ENCODE measurements at regions of chr4 and their contacts with region 1.

Region 1: GRCh38 chr4:88027611-88028608 is 20.5 kb downstream of the PKD2 start:
- DNase-seq: no peak
- ATAC-seq: no peak
- H3K4me3 ChIP-seq: no peak overlapping the region
- H3K27ac ChIP-seq: no peak overlapping the region
- H3K4me1 ChIP-seq: no peaks in the 10 kb centered on the region
- H3K27me3 ChIP-seq: no peaks in the 10 kb centered on the region
- CTCF ChIP-seq: no peak
- EP300 ChIP-seq: no peak
- POLR2A ChIP-seq: no peak
- RAD21 ChIP-seq: no peak

Region 2: DNA sequence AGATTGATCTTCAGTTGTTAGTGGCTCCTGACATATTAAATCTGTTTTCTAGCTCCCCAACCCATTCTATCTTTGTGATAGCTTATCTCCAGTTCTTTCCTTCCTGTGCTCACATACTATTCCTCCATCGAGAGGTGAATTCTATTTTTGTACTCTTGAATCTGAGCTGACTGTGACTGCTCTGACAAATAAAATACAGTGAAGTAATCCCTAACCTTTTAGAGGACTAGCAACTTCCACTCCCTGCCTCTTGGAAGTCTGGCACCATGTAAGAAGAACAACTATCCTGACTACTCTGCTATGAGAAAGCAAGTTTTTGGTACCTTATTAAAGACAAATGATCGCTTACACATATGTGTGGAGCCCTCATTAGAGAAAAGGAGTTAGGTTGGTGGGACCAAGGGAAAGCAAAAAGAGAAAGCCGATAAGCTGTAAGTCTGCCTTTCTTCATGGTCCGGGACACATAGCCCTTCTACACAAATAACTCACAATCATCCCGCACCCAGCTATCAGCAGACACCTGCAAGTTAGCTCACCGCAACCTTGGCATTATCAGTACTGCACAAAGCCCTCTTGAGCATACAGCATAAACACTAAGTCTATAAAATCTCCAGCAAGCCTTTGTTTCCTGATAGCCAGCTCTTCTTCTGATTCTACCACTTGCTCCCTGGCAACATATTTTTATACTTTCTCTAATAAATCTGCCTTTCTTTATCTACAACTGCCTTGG is 270.0 kb after region 1 on chr4:
- CTCF ChIA-PET with region 1: no interaction called
- POLR2A ChIA-PET with region 1: no interaction called
- in situ Hi-C with region 1: no loop called
- intact Hi-C with region 1: no loop called
- DNase-seq: no peak
- ATAC-seq: no peak
- H3K4me3 ChIP-seq: no peak overlapping the region
- H3K27ac ChIP-seq: no peak overlapping the region
- H3K4me1 ChIP-seq: no peaks in the 10 kb centered on the region
- H3K27me3 ChIP-seq: peaks cover 0 to 11% of the 10 kb centered on the region in 2 experiments; a peak in 1 of 5 replicates
- CTCF ChIP-seq: no peak
- EP300 ChIP-seq: no peak
- POLR2A ChIP-seq: no peak
- RAD21 ChIP-seq: no peak

Region 3: DNA sequence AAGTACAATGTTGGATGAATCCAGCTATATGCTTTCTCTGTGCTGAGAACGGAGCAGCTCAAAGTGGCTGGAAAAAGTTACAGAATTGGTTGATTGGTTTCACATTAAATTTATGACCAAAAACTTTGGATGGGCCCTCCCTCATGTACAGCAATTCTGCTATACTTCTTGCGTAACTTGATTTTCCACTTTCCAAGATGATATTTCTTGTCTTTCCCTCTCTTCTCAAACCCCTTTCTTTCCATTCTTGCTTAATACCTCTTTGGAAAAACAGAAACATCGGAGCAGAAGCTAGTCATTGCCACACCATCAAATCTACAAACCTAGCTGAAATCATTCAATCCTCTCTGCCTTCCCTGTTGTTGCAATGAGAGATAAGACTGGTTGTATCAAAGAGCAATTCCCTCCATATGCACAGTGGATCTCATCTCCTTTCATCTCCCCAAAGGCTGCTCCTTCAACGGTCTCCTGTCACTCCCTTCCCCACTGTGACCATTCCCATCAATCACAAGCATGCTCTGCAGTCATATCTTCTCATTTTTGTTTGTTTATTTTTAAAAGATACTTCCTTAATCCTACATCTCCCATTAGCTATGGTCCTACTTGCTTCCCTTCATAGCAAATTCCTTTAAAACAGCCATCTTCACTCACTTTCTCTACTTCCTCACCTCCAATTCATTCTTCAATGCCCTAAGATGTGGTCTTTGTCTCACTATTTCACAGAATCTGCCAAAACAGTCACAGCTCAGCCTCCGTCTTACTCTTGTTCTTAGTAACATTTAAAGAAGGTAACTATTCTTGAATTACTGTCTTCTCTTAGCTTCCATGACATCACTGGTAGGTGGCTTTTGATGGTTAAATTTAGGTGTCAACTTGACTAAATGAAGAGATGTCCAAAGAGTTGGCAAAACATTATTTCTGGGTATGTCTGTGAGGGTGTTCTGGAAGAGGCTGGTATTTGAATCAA is 883.6 kb after region 1 on chr4:
- CTCF ChIA-PET with region 1: no interaction called
- POLR2A ChIA-PET with region 1: no interaction called
- in situ Hi-C with region 1: no loop called
- intact Hi-C with region 1: loop called (anchors 5 kb)
- DNase-seq: no peak
- ATAC-seq: no peak
- H3K4me3 ChIP-seq: no peak overlapping the region
- H3K27ac ChIP-seq: no peak overlapping the region
- H3K4me1 ChIP-seq: peaks cover 7% of the 10 kb centered on the region; the same call in 1 of the 2 replicates
- H3K27me3 ChIP-seq: no peaks in the 10 kb centered on the region
- CTCF ChIP-seq: no peak
- EP300 ChIP-seq: no peak
- POLR2A ChIP-seq: no peak
- RAD21 ChIP-seq: no peak